Right ventricle myocardium inferior (tissue), 1 donor: ENCODE measurements at regions of chr14 and their contacts with region 1.

Region 1: GRCh38 chr14:39266871-39267591 is 33.3 kb downstream of the MIA2 start:
- DNase-seq: peak; percentile 94
- ATAC-seq: peak; percentile 97

Region 2: GRCh38 chr14:39114073-39114838 is 152.8 kb before region 1 on chr14 and contains the start of gene GEMIN2:
- intact Hi-C with region 1: loop called (anchors 5 kb)
- DNase-seq: peak; percentile 98
- ATAC-seq: peak; percentile 100
- total RNA-seq, gene GEMIN2: 7.0 TPM

Region 3: GRCh38 chr14:39174560-39175444 is 92.2 kb before region 1 on chr14 and contains the start of gene PNN:
- intact Hi-C with region 1: loop called (anchors 2 kb)
- DNase-seq: peak; percentile 97
- ATAC-seq: peak; percentile 98
- total RNA-seq, gene PNN: 21.7 TPM

Region 4: DNA sequence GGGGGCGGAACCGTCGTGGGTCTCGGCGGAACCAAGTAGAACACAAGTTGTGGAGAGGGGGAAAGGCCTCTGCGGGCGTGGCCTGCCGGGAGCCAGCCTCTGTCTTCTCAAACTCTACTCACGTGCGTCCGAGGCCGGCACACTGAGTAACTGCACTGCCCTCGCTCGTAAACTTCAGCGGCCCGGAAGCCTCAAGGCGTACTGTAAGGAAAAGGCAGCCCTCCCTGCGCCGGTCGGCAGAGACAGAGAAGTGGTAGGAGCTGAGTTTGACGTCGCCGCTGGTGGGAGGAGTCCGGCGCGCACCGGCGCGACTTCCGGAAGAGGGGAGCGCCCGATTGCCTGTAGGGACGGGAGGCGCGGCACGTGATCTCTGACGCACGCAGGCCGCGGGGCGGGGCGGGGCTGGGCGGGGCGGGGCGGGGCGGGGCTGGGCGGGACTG is 165.2 kb after region 1 on chr14 and contains the start of gene FBXO33:
- intact Hi-C with region 1: loop called (anchors 1 kb)
- DNase-seq: peak; percentile 98
- ATAC-seq: peak; percentile 96
- total RNA-seq, gene FBXO33: 4.0 TPM